ENCODE measurements at regions of chr13 and their contacts with region 1.

Region 1: GRCh38 chr13:71046360-71047079 is 820.5 kb downstream of the DACH1 start:
- DNase-seq: no peak
- H3K4me3 ChIP-seq: no peak overlapping the region
- H3K4me3 Mint-ChIP-seq: no peak overlapping the region
- H3K27ac Mint-ChIP-seq: no peak overlapping the region
- H3K4me1 ChIP-seq: peaks cover 20% of the 10 kb centered on the region
- H3K4me1 Mint-ChIP-seq: peaks cover 22% of the 10 kb centered on the region
- H3K27me3 ChIP-seq: no peaks in the 10 kb centered on the region
- H3K27me3 Mint-ChIP-seq: no peaks in the 10 kb centered on the region
- CTCF ChIP-seq: no peak

Region 2: GRCh38 chr13:71030784-71031183 is 15.7 kb before region 1 on chr13:
- CTCF ChIA-PET with region 1: no interaction called
- POLR2A ChIA-PET with region 1: no interaction called
- intact Hi-C with region 1: loop called (anchors 2 kb)
- DNase-seq: peak; percentile 72 to 84
- H3K4me3 ChIP-seq: no peak overlapping the region
- H3K4me3 Mint-ChIP-seq: peak overlapping the region; percentile 60
- H3K27ac Mint-ChIP-seq: peak overlapping the region; percentile 87
- H3K4me1 ChIP-seq: peaks cover 28% of the 10 kb centered on the region
- H3K4me1 Mint-ChIP-seq: peaks cover 19% of the 10 kb centered on the region
- H3K27me3 ChIP-seq: no peaks in the 10 kb centered on the region
- H3K27me3 Mint-ChIP-seq: no peaks in the 10 kb centered on the region
- CTCF ChIP-seq: no peak